ENCODE measurements at regions of chr1 and their contacts with region 1.

Region 1: GRCh38 chr1:54406339-54407153 is at the start of gene SSBP3:
- DNase-seq: peak; percentile 93
- ATAC-seq: peak; percentile 85
- H3K4me3 Mint-ChIP-seq: peak within 1 kb of the TSS; percentile 84
- H3K27ac Mint-ChIP-seq: peak within 1 kb of the TSS; percentile 90
- H3K4me1 Mint-ChIP-seq: peaks cover 59% of the 10 kb centered on the region
- H3K27me3 Mint-ChIP-seq: no peaks in the 10 kb centered on the region
- CTCF ChIP-seq: no peak
- total RNA-seq, gene SSBP3: 62.6 to 67.8 TPM

Region 2: GRCh38 chr1:54052934-54053744 is 353.4 kb before region 1 on chr1 and contains the starts of genes TCEANC2 and TMEM59:
- CTCF ChIA-PET with region 1: no interaction called
- POLR2A ChIA-PET with region 1: no interaction called
- intact Hi-C with region 1: loop called (anchors 5 kb)
- DNase-seq: peak; percentile 99
- ATAC-seq: peak; percentile 95
- H3K4me3 Mint-ChIP-seq: no peak within 1 kb of the TSS
- H3K27ac Mint-ChIP-seq: no peak within 1 kb of the TSS
- H3K4me1 Mint-ChIP-seq: peaks cover 31% of the 10 kb centered on the region
- H3K27me3 Mint-ChIP-seq: no peaks in the 10 kb centered on the region
- CTCF ChIP-seq: no peak
- total RNA-seq, gene TCEANC2: 11.1 to 11.2 TPM
- total RNA-seq, gene TMEM59: 93.4 to 109 TPM

Region 3: GRCh38 chr1:54199765-54200518 is 206.6 kb before region 1 on chr1 and contains the starts of genes CYB5RL and MRPL37:
- CTCF ChIA-PET with region 1: interaction called, 10 read pairs
- POLR2A ChIA-PET with region 1: no interaction called
- intact Hi-C with region 1: loop called (anchors 10 kb)
- DNase-seq: peak; percentile 96
- ATAC-seq: peak; percentile 98
- H3K4me3 Mint-ChIP-seq: peak within 1 kb of the TSS; percentile 94
- H3K27ac Mint-ChIP-seq: peak within 1 kb of the TSS; percentile 84
- H3K4me1 Mint-ChIP-seq: peaks cover 28% of the 10 kb centered on the region
- H3K27me3 Mint-ChIP-seq: no peaks in the 10 kb centered on the region
- CTCF ChIP-seq: no peak
- total RNA-seq, gene CYB5RL: 11.4 to 12.6 TPM
- total RNA-seq, gene MRPL37: 194 to 198 TPM

Region 4: DNA sequence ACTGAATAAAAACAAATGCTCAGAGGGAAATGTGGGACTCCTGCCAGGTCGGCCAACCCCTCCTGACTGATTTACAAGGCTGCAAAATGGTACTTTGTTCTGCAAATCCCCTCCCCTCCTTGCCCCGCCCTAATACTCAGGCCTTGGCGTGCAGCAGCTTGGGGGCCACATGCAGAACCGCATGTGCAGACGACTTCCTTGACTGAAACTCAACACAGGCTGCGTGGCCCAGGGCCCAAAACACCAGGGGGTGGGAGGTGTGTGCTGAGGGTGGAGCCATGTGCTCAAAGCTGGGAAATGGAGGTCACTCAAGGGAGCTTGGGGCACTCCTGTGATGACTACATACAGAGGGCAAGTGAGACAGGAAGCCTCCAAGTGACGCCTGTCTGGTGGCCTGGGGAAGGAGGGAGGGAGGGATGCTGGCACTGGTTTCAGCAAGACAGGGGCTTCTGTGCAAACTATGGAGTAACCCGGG is 119.3 kb before region 1 on chr1:
- CTCF ChIA-PET with region 1: interaction called, 4 read pairs
- POLR2A ChIA-PET with region 1: interaction called, 5 read pairs
- intact Hi-C with region 1: loop called (anchors 5 kb)
- DNase-seq: peak; percentile 95
- ATAC-seq: peak; percentile 82
- H3K4me3 Mint-ChIP-seq: peak overlapping the region; percentile 74
- H3K27ac Mint-ChIP-seq: peak overlapping the region; percentile 98
- H3K4me1 Mint-ChIP-seq: peaks cover 92% of the 10 kb centered on the region
- H3K27me3 Mint-ChIP-seq: no peaks in the 10 kb centered on the region
- CTCF ChIP-seq: no peak

Region 5: GRCh38 chr1:54302951-54303843 is 103.3 kb before region 1 on chr1:
- CTCF ChIA-PET with region 1: no interaction called
- POLR2A ChIA-PET with region 1: interaction called, 4 read pairs
- intact Hi-C with region 1: loop called (anchors 5 kb)
- DNase-seq: peak; percentile 62
- ATAC-seq: peak; percentile 66
- H3K4me3 Mint-ChIP-seq: peak overlapping the region; percentile 37
- H3K27ac Mint-ChIP-seq: peak overlapping the region; percentile 85
- H3K4me1 Mint-ChIP-seq: peaks cover 77% of the 10 kb centered on the region
- H3K27me3 Mint-ChIP-seq: no peaks in the 10 kb centered on the region
- CTCF ChIP-seq: no peak

Region 6: DNA sequence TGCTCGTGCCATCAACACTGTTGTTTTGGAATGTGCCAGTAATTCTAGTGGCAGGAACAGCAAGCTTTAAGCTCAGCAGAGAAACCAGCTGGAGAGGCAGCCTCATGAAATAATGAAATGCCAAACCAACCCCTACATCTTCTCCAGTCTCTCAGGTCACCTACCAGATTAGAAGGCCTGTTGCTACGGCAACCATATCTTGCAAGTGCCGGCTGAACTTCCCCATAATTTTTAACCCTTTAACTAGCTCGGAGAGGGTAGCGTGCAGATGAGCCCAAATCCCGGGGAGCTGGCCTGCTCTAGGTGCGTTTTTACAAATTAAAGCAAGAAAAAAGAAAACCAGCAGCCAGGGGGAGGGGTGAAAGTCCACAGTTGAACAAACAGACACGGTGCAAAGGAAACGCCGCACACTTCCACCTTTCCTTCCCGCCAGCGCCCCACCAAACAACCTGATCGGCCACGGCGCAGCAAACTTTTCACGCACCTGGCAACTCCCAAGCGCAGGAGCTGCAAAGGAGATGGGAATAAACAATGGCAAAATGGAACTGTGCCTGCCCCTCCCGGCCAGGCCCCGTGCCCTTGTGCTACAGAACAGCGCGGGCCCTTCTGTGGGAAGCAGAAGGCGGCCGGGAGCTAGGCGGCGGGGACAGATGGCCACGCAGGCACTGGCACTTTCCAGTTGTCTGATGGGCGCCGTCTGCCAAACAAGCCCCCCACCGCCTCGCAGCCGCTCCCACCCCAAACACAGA is 50.4 kb before region 1 on chr1:
- CTCF ChIA-PET with region 1: no interaction called
- POLR2A ChIA-PET with region 1: interaction called, 3 read pairs
- intact Hi-C with region 1: loop called (anchors 5 kb)
- DNase-seq: peak; percentile 37
- ATAC-seq: no peak
- H3K4me3 Mint-ChIP-seq: peak overlapping the region; percentile 78
- H3K27ac Mint-ChIP-seq: peak overlapping the region; percentile 92
- H3K4me1 Mint-ChIP-seq: peaks cover 91% of the 10 kb centered on the region
- H3K27me3 Mint-ChIP-seq: no peaks in the 10 kb centered on the region
- CTCF ChIP-seq: no peak

Region 7: GRCh38 chr1:54474639-54475251 is 68.2 kb after region 1 on chr1:
- CTCF ChIA-PET with region 1: no interaction called
- POLR2A ChIA-PET with region 1: interaction called, 3 read pairs
- intact Hi-C with region 1: loop called (anchors 5 kb)
- DNase-seq: peak; percentile 54
- ATAC-seq: peak; percentile 67
- H3K4me3 Mint-ChIP-seq: peak overlapping the region; percentile 60
- H3K27ac Mint-ChIP-seq: peak overlapping the region; percentile 70
- H3K4me1 Mint-ChIP-seq: peaks cover 46% of the 10 kb centered on the region
- H3K27me3 Mint-ChIP-seq: peaks cover 5% of the 10 kb centered on the region
- CTCF ChIP-seq: no peak

Measured in activated CD8-positive, alpha-beta T cell treated with anti-CD3 and anti-CD28 coated beads for 36 hours (primary cell).